ENCODE measurements at regions of chr14 and their contacts with region 1.

Region 1: GRCh38 chr14:20327005-20327869 is 5.8 kb downstream of the CCNB1IP1 start:
- H3K4me3 ChIP-seq: no peak overlapping the region
- H3K27ac ChIP-seq: no peak overlapping the region
- H3K4me1 ChIP-seq: peaks cover 6% of the 10 kb centered on the region; the same call in 1 of the 2 replicates
- CTCF ChIP-seq: 0 out of 2 replicates have a peak, but pooled peaks have one; percentile 24

Region 2: DNA sequence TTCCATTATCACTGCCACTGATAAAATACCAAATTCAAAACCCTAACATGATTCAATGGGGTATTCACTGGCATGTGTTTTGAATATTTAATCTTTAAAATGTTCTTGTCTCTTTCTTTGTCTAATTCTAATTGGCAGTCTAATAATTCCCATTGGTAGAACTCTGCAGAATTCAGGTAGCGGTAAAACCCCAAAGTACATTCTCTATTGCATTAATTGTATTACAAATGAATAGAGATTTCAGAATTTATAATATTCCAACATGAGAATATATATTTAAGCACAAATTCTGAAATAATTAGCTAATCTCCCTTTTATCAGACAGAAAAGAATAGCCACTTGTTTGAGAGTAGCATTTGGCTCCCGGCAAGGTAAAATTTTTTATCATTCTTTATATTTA is 188.7 kb before region 1 on chr14 and contains the start of gene OR4N5:
- CTCF ChIA-PET with region 1: no interaction called
- POLR2A ChIA-PET with region 1: no interaction called
- H3K4me3 ChIP-seq: no peak within 1 kb of the TSS
- H3K27ac ChIP-seq: no peak within 1 kb of the TSS
- H3K4me1 ChIP-seq: no peaks in the 10 kb centered on the region
- CTCF ChIP-seq: no peak

Region 3: GRCh38 chr14:20306079-20306423 is 21.2 kb before region 1 on chr14:
- CTCF ChIA-PET with region 1: interaction called, 13 read pairs
- POLR2A ChIA-PET with region 1: no interaction called
- H3K4me3 ChIP-seq: no peak overlapping the region
- H3K27ac ChIP-seq: no peak overlapping the region
- H3K4me1 ChIP-seq: peaks cover 6% of the 10 kb centered on the region; the same call in 1 of the 2 replicates
- CTCF ChIP-seq: no peak

Region 4: GRCh38 chr14:20606190-20606901 is 279.1 kb after region 1 on chr14:
- CTCF ChIA-PET with region 1: interaction called, 22 read pairs
- POLR2A ChIA-PET with region 1: no interaction called
- H3K4me3 ChIP-seq: no peak overlapping the region
- H3K27ac ChIP-seq: no peak overlapping the region
- H3K4me1 ChIP-seq: peaks cover 4% of the 10 kb centered on the region; the same call in 1 of the 2 replicates
- CTCF ChIP-seq: peak; percentile 39; the same call in 1 of the 2 replicates

Region 5: DNA sequence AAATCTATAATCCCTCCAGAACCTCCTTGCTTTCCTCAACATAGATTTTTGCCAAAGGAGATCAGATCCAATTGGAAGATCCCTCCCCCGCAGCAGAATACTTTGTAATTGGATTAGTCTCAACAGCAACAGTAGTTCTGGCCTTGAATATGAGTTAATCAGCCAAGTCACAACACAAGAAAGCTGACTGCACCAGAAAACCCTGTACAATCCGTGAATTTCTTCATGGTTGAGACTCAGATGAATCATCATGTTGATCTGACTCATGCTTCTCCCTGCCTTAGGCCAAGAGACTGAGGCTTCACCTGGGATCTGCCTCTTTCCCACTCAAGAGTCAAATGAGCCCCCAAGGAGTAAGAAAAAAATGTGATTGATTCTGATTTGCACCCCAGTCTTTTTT is 659.6 kb after region 1 on chr14:
- CTCF ChIA-PET with region 1: no interaction called
- POLR2A ChIA-PET with region 1: no interaction called
- H3K4me3 ChIP-seq: no peak overlapping the region
- H3K27ac ChIP-seq: no peak overlapping the region
- H3K4me1 ChIP-seq: 0 out of 2 replicates have a peak, but pooled peaks cover 2% of the 10 kb centered on the region
- CTCF ChIP-seq: no peak

Measured in HEK293 (cell line).